A673 (cell line): ENCODE measurements at regions of chr4 and their contacts with region 1.

Region 1: GRCh38 chr4:71713611-71714203 is 70.2 kb downstream of the GC start:
- DNase-seq: peak; percentile 38
- H3K4me3 ChIP-seq: no peak overlapping the region
- H3K27ac ChIP-seq: no peak overlapping the region
- H3K4me1 ChIP-seq: no peaks in the 10 kb centered on the region
- H3K27me3 ChIP-seq: no peaks in the 10 kb centered on the region
- CTCF ChIP-seq: peak; percentile 55

Region 2: DNA sequence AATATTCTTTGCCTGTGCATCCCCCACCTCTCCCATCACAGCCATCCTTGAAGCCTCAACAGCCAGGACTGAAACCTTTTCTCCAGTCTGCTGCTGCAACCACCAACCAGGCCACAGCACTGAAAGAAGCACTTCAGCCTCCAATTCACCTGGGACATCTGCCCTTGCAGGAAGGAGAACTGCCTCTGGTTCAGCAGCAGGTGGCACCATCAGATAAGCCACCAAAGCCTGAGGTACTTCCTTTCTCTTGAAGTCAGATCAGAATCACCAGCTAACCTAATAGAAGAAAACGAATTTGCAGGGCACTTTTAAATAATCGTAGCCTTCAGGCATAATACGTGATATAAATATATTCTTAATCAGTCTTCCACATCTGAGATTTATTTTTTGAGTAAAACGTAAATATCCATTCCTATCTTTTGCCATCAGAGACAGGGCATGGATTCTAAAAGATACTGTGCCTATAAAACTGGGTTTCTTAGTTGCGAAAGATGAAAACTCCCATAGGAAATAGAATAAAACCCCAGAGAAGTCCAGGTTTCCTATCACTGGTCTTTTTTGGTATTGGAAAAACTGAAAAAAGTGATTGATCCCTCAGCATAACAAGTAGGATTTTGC is 1112.2 kb before region 1 on chr4:
- CTCF ChIA-PET with region 1: no interaction called
- POLR2A ChIA-PET with region 1: no interaction called
- intact Hi-C with region 1: loop called (anchors 5 kb)
- DNase-seq: peak; percentile 68
- H3K4me3 ChIP-seq: no peak overlapping the region
- H3K27ac ChIP-seq: no peak overlapping the region
- H3K4me1 ChIP-seq: no peaks in the 10 kb centered on the region
- H3K27me3 ChIP-seq: no peaks in the 10 kb centered on the region
- CTCF ChIP-seq: peak; percentile 71

Region 3: GRCh38 chr4:70651864-70652506 is 1061.7 kb before region 1 on chr4:
- CTCF ChIA-PET with region 1: no interaction called
- POLR2A ChIA-PET with region 1: no interaction called
- intact Hi-C with region 1: loop called (anchors 5 kb)
- DNase-seq: peak; percentile 31
- H3K4me3 ChIP-seq: no peak overlapping the region
- H3K27ac ChIP-seq: no peak overlapping the region
- H3K4me1 ChIP-seq: no peaks in the 10 kb centered on the region
- H3K27me3 ChIP-seq: no peaks in the 10 kb centered on the region
- CTCF ChIP-seq: peak; percentile 46

Region 4: DNA sequence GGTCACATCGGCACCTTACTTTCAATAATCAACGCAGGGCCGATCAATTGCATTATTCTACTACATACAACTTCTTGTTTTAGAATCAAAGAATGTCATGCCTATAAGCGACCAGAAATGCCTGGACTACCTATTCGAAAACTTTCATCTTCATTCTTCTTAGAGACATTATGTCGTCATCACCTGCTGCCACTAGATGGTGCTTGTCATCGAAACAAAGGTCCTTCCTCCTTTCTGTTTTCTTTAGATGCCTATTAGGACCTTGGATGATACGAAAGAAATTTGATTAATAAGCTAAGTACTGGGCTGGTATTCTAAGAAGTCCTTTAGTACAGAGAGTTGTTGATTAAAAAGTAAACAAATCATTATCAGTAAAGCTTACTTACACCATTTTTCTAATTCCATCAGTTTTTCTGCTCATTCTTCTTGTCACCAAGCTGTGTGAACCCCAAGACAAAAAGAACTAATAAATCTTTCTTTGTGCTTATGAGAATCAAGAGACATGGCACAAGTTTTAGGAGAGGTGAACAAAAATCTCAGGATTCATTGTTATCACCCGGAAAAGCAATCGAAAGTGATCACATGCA is 529.4 kb before region 1 on chr4:
- CTCF ChIA-PET with region 1: no interaction called
- POLR2A ChIA-PET with region 1: no interaction called
- intact Hi-C with region 1: loop called (anchors 5 kb)
- DNase-seq: peak; percentile 55
- H3K4me3 ChIP-seq: no peak overlapping the region
- H3K27ac ChIP-seq: no peak overlapping the region
- H3K4me1 ChIP-seq: no peaks in the 10 kb centered on the region
- H3K27me3 ChIP-seq: peaks cover 5% of the 10 kb centered on the region
- CTCF ChIP-seq: peak; percentile 61

Region 5: DNA sequence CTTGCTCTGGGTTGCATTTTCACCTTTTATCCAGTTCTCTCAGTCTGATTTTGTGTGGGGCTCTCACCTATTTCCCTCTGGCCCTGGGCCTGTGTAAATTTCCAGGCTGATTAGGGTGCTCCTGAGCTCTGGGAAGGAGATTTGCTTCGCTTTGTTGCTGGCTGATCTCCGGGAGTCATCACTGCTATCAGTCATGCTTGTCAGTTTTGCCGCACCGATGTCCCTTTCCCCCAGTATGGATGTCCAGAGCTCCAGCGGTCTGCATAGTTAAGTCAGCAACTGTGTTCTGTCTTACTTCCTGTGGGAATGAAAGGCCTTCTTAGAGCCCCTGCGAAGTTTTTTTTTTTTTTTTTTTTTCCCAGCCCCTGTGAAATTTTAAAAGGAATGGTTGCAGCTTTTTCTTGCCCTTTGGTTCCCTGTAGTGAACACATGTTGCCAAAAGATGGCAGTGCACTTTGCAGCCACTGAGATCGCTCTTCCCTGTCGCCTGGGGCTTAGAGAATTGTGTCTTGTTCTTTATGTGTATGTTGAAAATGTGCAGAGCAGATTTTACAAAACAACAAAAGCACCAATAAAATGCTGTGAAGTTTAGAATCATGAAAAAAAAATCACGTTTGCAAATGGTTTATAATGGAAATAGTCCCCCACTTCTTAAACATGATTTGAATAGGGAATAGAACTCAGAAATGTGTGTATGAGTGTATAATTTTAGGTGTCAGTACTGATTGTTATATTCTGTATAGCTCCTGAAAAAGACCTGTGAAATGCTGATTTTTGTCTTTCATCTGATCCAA is 484.0 kb before region 1 on chr4:
- CTCF ChIA-PET with region 1: no interaction called
- POLR2A ChIA-PET with region 1: no interaction called
- intact Hi-C with region 1: loop called (anchors 5 kb)
- DNase-seq: peak; percentile 49
- H3K4me3 ChIP-seq: no peak overlapping the region
- H3K27ac ChIP-seq: no peak overlapping the region
- H3K4me1 ChIP-seq: peaks cover 13% of the 10 kb centered on the region
- H3K27me3 ChIP-seq: no peaks in the 10 kb centered on the region
- CTCF ChIP-seq: peak; percentile 64

Region 6: DNA sequence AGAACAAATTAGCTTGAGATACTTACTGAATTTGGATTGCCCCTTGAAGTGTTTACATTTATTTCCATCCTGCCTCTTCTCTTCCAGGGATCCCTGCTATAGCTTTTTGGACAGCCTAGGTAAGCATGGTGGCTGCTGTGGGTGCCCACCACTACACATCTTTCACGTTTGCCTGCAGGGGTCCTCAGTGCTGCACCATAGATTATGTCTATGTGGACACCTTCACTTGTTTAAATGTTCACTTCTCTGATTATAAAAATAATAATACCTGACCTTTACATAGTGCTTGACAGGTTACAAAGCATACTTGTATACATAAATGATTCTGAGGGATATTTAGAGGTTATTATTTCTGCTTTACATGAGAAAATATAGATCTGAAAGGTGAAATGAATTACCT is 442.8 kb before region 1 on chr4:
- CTCF ChIA-PET with region 1: no interaction called
- POLR2A ChIA-PET with region 1: no interaction called
- intact Hi-C with region 1: loop called (anchors 2 kb)
- DNase-seq: peak; percentile 46
- H3K4me3 ChIP-seq: no peak overlapping the region
- H3K27ac ChIP-seq: no peak overlapping the region
- H3K4me1 ChIP-seq: peaks cover 11% of the 10 kb centered on the region
- H3K27me3 ChIP-seq: no peaks in the 10 kb centered on the region
- CTCF ChIP-seq: peak; percentile 52

Region 7: DNA sequence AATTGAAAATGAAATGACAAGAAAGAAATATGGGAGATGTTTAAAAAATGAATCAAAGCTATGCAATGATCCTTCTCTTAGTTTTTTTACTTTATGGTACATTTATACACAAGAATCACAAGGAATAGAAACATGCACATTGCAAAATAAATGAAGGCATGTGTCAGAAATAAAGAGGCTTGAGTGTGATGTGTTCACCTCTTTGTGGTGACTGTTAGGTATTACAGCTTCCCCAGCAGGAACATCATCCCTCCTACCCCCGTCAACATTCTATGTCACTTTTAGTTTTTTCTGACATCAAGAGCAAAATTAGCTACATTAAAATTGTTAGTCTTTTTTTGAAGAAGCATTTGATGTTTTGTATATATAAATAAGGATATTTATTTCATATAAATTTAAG is 160.1 kb before region 1 on chr4:
- CTCF ChIA-PET with region 1: no interaction called
- POLR2A ChIA-PET with region 1: no interaction called
- intact Hi-C with region 1: loop called (anchors 10 kb)
- DNase-seq: peak; percentile 4
- H3K4me3 ChIP-seq: no peak overlapping the region
- H3K27ac ChIP-seq: no peak overlapping the region
- H3K4me1 ChIP-seq: no peaks in the 10 kb centered on the region
- H3K27me3 ChIP-seq: no peaks in the 10 kb centered on the region
- CTCF ChIP-seq: peak; percentile 43; the same call in 1 of the 2 replicates

Region 8: DNA sequence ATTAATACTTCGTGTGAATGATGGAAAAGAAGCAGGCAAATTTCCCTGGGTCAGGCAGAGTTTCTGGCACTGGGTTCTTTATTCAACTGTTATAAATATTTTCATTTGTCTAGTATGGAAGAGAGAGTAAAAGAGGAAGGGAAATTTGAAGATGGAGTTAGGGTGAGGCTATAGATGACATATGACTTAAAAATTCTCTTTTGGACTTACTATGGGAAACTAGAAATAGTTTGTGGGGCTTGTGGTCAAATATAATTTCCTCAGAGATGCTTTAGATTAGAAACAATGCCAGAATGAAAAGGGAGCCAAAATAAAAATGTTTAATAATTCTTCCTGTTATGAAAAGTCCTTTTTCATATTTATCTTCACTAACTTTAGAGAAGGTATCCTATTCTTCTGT is 33.0 kb before region 1 on chr4:
- CTCF ChIA-PET with region 1: no interaction called
- POLR2A ChIA-PET with region 1: no interaction called
- intact Hi-C with region 1: no loop called
- DNase-seq: no peak
- H3K4me3 ChIP-seq: no peak overlapping the region
- H3K27ac ChIP-seq: no peak overlapping the region
- H3K4me1 ChIP-seq: no peaks in the 10 kb centered on the region
- H3K27me3 ChIP-seq: no peaks in the 10 kb centered on the region
- CTCF ChIP-seq: no peak

Region 9: GRCh38 chr4:71962622-71963264 is 249.0 kb after region 1 on chr4:
- CTCF ChIA-PET with region 1: no interaction called
- POLR2A ChIA-PET with region 1: no interaction called
- intact Hi-C with region 1: no loop called
- DNase-seq: no peak
- H3K4me3 ChIP-seq: no peak overlapping the region
- H3K27ac ChIP-seq: no peak overlapping the region
- H3K4me1 ChIP-seq: no peaks in the 10 kb centered on the region
- H3K27me3 ChIP-seq: no peaks in the 10 kb centered on the region
- CTCF ChIP-seq: no peak